Adrenal gland (tissue), 19 donors: ENCODE measurements at regions of chr11 and their contacts with region 1.

Region 1: DNA sequence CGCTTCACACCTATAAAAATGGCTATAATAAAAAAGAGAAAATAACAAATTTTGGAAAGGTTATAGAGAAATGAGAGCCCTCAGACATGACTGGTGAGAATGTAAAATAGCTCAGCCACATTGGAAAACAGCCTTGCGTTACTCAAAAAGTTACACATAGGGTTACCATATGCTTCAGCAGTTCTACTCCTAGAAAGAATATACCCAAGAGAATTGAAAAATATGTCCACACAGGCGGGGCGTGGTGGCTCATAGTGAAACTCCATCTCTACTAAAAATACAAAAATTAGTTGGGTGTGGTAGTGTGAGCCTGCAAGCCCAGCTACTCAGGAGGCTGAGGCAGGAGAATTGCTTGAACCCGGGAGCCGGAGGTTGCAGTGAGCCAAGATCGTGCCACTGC is 7.6 kb upstream of the JHY start:
- DNase-seq: no peak
- H3K4me3 ChIP-seq: no peak overlapping the region
- H3K27ac ChIP-seq: no peak overlapping the region
- H3K4me1 ChIP-seq: no peaks in the 10 kb centered on the region
- H3K27me3 ChIP-seq: peaks cover 5% of the 10 kb centered on the region
- CTCF ChIP-seq: no peak
- POLR2A ChIP-seq: no peak

Region 2: GRCh38 chr11:123011510-123011909 is 136.5 kb after region 1 on chr11:
- intact Hi-C with region 1: loop called in 1 of 2 experiments (anchors 10 kb)
- DNase-seq: no peak
- H3K4me3 ChIP-seq: no peak overlapping the region
- H3K27ac ChIP-seq: no peak overlapping the region
- H3K4me1 ChIP-seq: no peaks in the 10 kb centered on the region
- H3K27me3 ChIP-seq: peaks cover 6% of the 10 kb centered on the region
- CTCF ChIP-seq: no peak
- POLR2A ChIP-seq: no peak